Endothelial cell of umbilical vein (primary cell): ENCODE measurements at regions of chr15 and their contacts with region 1.

Region 1: GRCh38 chr15:38084289-38084688 is 149.8 kb downstream of the TMCO5A start:
- DNase-seq: peak; percentile 75
- H3K4me3 ChIP-seq: peak overlapping the region in 2 of 3 experiments; percentile 14 to 28
- H3K27ac ChIP-seq: peak overlapping the region; percentile 32
- H3K4me1 ChIP-seq: peaks cover 37% of the 10 kb centered on the region
- H3K27me3 ChIP-seq: no peaks in the 10 kb centered on the region
- CTCF ChIP-seq: no peak
- POLR2A ChIP-seq: no peak

Region 2: DNA sequence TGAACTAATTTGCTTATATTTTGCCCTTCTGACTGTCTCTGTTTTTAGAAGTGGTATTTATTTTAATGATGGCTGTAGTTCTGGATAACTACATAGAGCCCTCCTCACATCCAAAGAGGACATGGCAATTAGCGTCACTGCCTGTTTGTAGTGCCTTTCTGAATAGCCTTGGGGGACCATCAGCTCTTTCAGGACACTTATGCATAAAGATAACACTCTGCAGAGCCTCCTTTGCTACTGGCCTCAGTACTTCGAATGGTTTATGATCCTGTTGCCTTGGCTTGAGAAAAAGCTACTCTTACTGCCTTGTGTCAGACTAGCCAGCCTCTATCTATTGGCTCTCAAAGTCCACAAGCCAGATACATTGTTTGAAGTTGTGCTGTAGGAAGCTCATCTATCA is 63.0 kb after region 1 on chr15:
- CTCF ChIA-PET with region 1: interaction called, 6 read pairs
- POLR2A ChIA-PET with region 1: interaction called, 15 read pairs
- dilution Hi-C with region 1: no loop called
- intact Hi-C with region 1: no loop called
- DNase-seq: no peak
- H3K4me3 ChIP-seq: no peak overlapping the region
- H3K27ac ChIP-seq: no peak overlapping the region
- H3K4me1 ChIP-seq: no peaks in the 10 kb centered on the region
- H3K27me3 ChIP-seq: peaks cover 0 to 14% of the 10 kb centered on the region in 2 experiments
- CTCF ChIP-seq: no peak
- POLR2A ChIP-seq: no peak

Region 3: DNA sequence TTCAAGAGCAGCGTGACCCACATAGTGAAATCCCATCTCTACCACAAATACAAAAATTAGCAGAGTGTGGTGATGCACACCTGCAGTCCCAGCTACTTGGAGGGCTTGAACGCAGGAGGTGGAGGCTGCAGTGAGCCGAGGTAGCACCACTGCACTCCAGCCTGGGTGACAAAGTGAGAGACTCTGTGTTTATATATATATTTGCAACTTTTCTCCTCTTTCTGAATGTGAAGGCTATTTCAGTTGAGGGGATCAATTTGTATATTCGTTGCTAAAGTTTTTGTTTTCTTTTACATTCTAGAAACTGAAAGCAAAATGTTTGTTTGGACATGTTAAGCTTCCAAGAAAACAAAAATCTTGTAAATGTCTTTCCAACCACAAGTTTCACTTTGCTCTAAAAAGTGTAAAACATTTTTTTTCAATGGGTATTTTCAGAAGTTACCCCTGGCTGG is 339.8 kb after region 1 on chr15:
- CTCF ChIA-PET with region 1: no interaction called
- POLR2A ChIA-PET with region 1: no interaction called
- dilution Hi-C with region 1: no loop called
- intact Hi-C with region 1: no loop called
- DNase-seq: no peak
- H3K4me3 ChIP-seq: no peak overlapping the region
- H3K27ac ChIP-seq: no peak overlapping the region
- H3K4me1 ChIP-seq: no peaks in the 10 kb centered on the region
- H3K27me3 ChIP-seq: peaks cover 22 to 47% of the 10 kb centered on the region in 2 experiments
- CTCF ChIP-seq: no peak
- POLR2A ChIP-seq: no peak